ENCODE measurements at regions of chr5 and their contacts with region 1.

Region 1: DNA sequence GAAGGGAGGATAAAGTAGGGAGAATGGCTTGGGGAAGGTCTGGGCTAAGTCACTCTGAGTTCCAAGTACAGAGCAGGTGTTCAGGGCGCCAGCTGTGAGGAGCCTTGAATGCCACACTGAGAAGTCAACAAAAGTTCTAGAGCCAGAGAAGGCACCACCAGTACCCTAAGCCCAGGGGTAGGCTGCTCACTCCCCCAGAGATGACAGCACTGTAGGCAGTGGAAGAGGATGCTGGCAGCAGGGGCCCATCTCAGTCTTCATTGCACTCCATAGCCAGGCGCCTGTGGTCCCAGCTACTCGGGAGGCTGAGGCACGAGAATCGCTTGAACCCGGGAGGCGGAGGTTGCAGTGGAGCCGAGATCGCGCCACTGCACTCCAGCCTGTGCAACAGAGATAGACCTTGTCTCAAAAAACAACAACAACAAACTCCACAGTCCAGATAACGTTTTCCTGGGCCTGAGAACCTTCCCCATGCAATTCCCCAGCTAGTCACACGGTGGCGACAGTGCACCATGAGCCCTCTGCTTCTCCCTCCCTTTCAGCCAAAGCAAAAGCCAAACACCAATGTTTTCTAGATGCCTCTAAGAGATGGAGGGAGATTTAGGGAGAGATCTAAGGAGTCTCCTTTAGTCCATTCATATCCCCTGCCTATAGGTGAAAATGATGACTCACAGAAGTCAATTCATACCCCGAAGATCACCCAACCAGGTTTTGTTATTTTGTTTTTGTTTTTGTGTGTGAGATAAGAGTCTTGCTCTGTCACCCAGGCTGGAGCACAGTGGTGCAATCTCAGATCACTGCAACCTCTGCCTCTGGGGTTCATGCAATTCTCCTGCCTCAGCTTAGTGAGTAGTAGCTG is 19.8 kb upstream of the NSD1 start:
- DNase-seq: peak; percentile 81 to 86 (median 83)
- H3K4me3 ChIP-seq: peak overlapping the region in 1 of 3 donors; percentile 50
- H3K27ac ChIP-seq: no peak overlapping the region
- H3K4me1 ChIP-seq: peaks cover 0 to 15% (median 0%) of the 10 kb centered on the region in 3 donors
- H3K27me3 ChIP-seq: no peaks in the 10 kb centered on the region
- CTCF ChIP-seq: peak; percentile 99

Region 2: DNA sequence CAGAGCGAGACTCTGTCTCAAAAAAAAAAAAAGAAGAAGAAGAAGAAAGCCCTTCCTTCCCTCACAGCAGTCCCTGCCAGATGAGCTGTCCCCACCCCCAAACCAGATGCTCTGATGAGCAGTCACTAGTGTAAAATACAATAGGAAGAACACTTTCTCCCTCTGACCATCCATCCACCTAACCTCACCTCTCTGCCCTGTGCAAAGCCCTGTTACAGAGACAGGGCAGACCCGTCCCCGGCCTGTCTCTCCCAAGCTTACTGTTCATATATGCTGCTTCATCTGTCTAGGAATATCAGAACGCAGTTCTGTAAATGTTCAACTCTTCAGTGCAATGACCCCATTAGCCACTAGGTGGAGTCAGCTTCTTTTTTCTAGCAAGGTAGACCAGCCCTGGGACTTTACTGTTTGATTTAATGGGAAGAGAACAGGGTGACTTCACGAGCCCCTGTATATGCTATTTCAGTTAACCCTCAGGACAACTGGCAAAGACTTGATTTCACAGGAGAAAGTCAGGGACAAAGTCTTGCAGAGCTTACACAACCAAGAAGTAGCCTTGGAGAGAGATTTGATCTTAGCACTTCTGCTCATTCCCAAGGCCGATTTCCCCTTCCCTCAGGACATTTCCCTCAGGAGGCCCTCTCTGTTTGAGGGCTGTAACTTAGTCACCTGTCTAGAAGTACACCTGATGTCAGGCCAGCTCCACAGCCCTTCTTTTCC is 42.0 kb before region 1 on chr5:
- intact Hi-C with region 1: loop called (anchors 5 kb)
- DNase-seq: peak; percentile 26 to 92 (median 84)
- H3K4me3 ChIP-seq: no peak overlapping the region
- H3K27ac ChIP-seq: no peak overlapping the region
- H3K4me1 ChIP-seq: no peaks in the 10 kb centered on the region
- H3K27me3 ChIP-seq: no peaks in the 10 kb centered on the region
- CTCF ChIP-seq: peak; percentile 88

Region 3: DNA sequence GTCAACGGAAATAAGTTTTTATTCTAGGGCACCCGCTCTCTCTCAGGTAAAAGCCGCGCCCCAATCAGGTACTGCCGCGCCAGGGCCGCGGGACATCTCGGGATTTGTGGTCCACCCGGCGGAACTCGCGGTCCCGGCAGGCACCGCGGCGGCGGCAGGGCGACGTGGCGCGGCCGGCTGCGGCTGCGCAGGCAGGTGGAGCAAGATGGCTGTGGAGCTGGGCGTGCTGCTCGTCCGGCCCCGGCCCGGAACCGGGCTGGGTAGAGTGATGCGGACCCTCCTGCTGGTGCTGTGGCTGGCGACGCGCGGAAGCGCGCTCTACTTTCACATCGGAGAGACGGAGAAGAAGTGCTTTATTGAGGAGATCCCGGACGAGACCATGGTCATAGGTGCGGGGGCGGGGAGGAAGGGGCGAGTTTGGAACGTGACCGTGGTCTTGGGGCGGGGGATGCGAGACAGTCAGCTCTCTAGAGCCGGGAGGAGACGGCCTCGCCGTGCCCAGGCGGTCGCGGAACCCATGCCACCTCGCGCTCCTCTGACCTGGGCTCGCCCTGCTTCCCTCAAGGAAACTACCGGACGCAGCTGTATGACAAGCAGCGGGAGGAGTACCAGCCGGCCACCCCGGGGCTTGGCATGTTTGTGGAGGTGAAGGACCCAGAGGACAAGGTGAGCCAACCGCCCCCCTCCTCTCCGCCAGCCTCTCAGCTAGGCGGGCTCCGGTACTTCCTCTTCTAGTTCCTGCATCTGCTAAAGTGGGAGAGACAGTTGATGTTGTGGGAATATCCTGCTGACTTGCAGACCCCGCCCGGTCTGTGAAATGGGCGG is 478.4 kb after region 1 on chr5 and contains the start of gene TMED9:
- intact Hi-C with region 1: no loop called
- DNase-seq: peak; percentile 88 to 94 (median 92)
- H3K4me3 ChIP-seq: peak within 1 kb of the TSS; percentile 84 to 97 (median 89)
- H3K27ac ChIP-seq: peak within 1 kb of the TSS in 1 of 2 donors; percentile 75
- H3K4me1 ChIP-seq: peaks cover 0 to 6% (median 0%) of the 10 kb centered on the region in 3 donors
- H3K27me3 ChIP-seq: no peaks in the 10 kb centered on the region
- CTCF ChIP-seq: peak; percentile 17
- total RNA-seq, gene TMED9: 168 TPM